ENCODE measurements at regions of chr2 and their contacts with region 1.

Region 1: GRCh38 chr2:109031476-109032228 is 42.6 kb upstream of the EDAR start:
- DNase-seq: peak; percentile 48 to 94 (median 77)
- ATAC-seq: peak; percentile 74
- H3K4me3 ChIP-seq: peak overlapping the region; percentile 49 to 60
- H3K4me3 Mint-ChIP-seq: peak overlapping the region; percentile 76
- H3K27ac ChIP-seq: peak overlapping the region; percentile 76 to 82
- H3K27ac Mint-ChIP-seq: peak overlapping the region; percentile 90
- H3K4me1 ChIP-seq: peaks cover 75% of the 10 kb centered on the region
- H3K4me1 Mint-ChIP-seq: peaks cover 68% of the 10 kb centered on the region
- H3K27me3 ChIP-seq: no peaks in the 10 kb centered on the region
- H3K27me3 Mint-ChIP-seq: no peaks in the 10 kb centered on the region
- CTCF ChIP-seq: no peak

Region 2: GRCh38 chr2:107469437-107469995 is 1562.1 kb before region 1 on chr2:
- CTCF ChIA-PET with region 1: no interaction called
- POLR2A ChIA-PET with region 1: no interaction called
- intact Hi-C with region 1: no loop called
- DNase-seq: no peak
- ATAC-seq: no peak
- H3K4me3 ChIP-seq: no peak overlapping the region
- H3K4me3 Mint-ChIP-seq: no peak overlapping the region
- H3K27ac ChIP-seq: no peak overlapping the region
- H3K27ac Mint-ChIP-seq: no peak overlapping the region
- H3K4me1 ChIP-seq: no peaks in the 10 kb centered on the region
- H3K4me1 Mint-ChIP-seq: no peaks in the 10 kb centered on the region
- H3K27me3 ChIP-seq: no peaks in the 10 kb centered on the region
- H3K27me3 Mint-ChIP-seq: no peaks in the 10 kb centered on the region
- CTCF ChIP-seq: no peak

Region 3: DNA sequence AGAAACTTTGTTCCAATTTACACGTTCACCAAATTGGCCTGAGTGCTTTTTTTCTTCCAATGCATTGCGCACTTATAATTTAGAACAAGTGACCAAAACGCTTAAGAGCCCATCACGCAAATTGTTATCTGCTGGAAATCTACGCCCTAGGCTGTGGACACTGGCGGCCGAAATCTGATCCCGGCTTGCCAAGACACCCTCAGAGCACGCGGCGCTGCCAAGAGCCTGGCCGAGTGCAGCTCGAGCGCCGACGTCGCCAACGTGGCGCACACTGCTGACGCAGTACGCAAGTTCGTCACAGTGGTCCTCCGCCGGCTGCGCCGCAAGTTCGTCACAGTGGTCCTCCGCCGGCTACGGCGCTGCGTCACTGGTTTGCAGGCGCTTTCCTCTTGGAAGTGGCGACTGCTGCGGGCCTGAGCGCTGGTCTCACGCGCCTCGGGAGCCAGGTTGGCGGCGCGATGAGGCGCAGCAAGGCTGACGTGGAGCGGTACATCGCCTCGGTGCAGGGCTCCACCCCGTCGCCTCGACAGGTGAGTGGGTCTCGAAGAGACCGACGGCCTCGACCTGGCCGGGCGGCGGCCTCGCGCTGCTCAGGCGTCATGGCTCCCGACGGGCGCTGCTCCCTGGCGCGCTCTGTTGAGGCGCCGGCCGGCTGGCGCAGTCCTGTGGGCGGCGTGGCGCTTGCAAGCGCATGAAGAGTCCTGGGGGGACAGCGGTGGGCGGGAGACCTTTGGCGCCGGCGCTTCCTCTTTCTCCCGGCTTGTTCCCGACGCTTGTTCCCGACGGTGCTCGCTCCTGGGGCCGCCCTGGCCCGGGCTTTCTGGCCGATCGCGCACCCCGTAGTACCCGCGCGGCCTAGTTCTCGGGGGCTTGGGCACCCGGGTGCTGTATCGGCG is 312.3 kb before region 1 on chr2 and contains the start of gene RANBP2:
- CTCF ChIA-PET with region 1: no interaction called
- POLR2A ChIA-PET with region 1: no interaction called
- intact Hi-C with region 1: loop called in 1 of 2 experiments (anchors 2 kb)
- DNase-seq: peak; percentile 87 to 99 (median 94)
- ATAC-seq: peak; percentile 87
- H3K4me3 ChIP-seq: peak within 1 kb of the TSS; percentile 47 to 57
- H3K4me3 Mint-ChIP-seq: peak within 1 kb of the TSS; percentile 94
- H3K27ac ChIP-seq: peak within 1 kb of the TSS; percentile 91
- H3K27ac Mint-ChIP-seq: peak within 1 kb of the TSS; percentile 99
- H3K4me1 ChIP-seq: peaks cover 16% of the 10 kb centered on the region
- H3K4me1 Mint-ChIP-seq: peaks cover 24% of the 10 kb centered on the region
- H3K27me3 ChIP-seq: no peaks in the 10 kb centered on the region
- H3K27me3 Mint-ChIP-seq: no peaks in the 10 kb centered on the region
- CTCF ChIP-seq: no peak
- total RNA-seq, gene RANBP2: 238 to 240 TPM

Region 4: DNA sequence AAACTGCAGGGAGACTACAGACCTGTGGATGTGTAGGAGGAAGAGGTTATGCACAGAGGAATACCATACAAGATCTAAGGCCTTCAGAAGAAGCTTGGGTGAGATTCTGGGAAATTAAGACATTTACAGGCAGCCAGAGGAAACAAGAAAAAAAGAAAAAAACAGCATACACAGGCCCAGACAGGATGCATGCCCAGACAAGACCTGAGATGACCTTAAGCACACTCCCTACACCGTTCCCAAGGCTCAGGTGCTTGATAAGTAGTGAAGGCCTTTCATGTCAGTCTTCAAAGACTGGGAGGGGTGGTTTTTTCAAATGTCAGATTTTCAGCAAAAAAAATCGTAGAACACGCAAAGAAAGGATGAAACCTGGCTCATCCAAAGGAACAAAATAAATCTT is 162.1 kb before region 1 on chr2:
- CTCF ChIA-PET with region 1: no interaction called
- POLR2A ChIA-PET with region 1: no interaction called
- intact Hi-C with region 1: no loop called
- DNase-seq: no peak
- ATAC-seq: no peak
- H3K4me3 ChIP-seq: no peak overlapping the region
- H3K4me3 Mint-ChIP-seq: no peak overlapping the region
- H3K27ac ChIP-seq: no peak overlapping the region
- H3K27ac Mint-ChIP-seq: no peak overlapping the region
- H3K4me1 ChIP-seq: no peaks in the 10 kb centered on the region
- H3K4me1 Mint-ChIP-seq: no peaks in the 10 kb centered on the region
- H3K27me3 ChIP-seq: no peaks in the 10 kb centered on the region
- H3K27me3 Mint-ChIP-seq: no peaks in the 10 kb centered on the region
- CTCF ChIP-seq: no peak

Region 5: DNA sequence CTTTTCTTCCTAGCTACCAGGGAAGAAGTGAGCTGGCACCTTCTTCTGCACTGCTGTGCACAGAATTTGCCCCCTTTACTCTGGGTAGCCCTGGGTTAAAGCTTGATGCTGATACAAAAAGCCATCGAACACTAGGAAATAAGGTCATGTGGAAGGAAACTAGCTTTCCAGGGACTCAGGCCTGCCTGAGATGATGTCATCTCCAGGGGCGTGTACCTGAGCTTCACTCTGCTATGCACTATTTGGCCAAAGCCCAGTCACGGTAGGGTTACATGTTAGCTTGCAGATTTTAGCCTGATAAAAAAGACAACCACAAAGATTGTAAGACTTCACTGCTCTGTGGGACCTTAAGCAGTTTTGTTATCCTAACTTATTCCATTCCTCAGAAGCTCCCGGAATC is 63.0 kb before region 1 on chr2:
- CTCF ChIA-PET with region 1: no interaction called
- POLR2A ChIA-PET with region 1: interaction called, 14 read pairs
- intact Hi-C with region 1: loop called in 1 of 2 experiments (anchors 1 kb)
- DNase-seq: no peak
- ATAC-seq: no peak
- H3K4me3 ChIP-seq: no peak overlapping the region
- H3K4me3 Mint-ChIP-seq: no peak overlapping the region
- H3K27ac ChIP-seq: no peak overlapping the region
- H3K27ac Mint-ChIP-seq: no peak overlapping the region
- H3K4me1 ChIP-seq: peaks cover 70% of the 10 kb centered on the region
- H3K4me1 Mint-ChIP-seq: peaks cover 88% of the 10 kb centered on the region
- H3K27me3 ChIP-seq: no peaks in the 10 kb centered on the region
- H3K27me3 Mint-ChIP-seq: no peaks in the 10 kb centered on the region
- CTCF ChIP-seq: no peak

Region 6: DNA sequence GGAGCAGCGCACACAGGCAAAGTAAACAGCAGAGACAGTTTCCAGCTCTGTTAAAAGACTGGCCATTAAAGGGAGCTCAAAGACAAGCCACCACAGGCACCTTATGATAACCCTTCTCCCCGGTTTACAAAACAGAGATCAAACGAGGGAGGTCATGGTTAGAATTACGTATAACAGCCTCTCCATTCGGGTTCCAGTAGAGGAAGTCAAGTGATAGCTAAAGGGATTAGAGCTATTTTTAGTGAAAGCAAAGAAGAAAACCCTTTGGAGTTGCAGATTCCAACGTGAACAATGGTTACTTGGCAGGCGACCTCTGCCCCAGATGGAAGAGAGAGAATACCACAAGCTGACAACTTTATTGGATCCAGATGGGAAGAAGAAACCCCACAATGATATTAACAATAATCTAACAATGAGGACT is 11.4 kb before region 1 on chr2:
- CTCF ChIA-PET with region 1: interaction called, 12 read pairs
- POLR2A ChIA-PET with region 1: interaction called, 17 read pairs
- intact Hi-C with region 1: no loop called
- DNase-seq: peak in 2 of 9 experiments; percentile 24 to 48
- ATAC-seq: peak; percentile 92
- H3K4me3 ChIP-seq: no peak overlapping the region
- H3K4me3 Mint-ChIP-seq: peak overlapping the region; percentile 9
- H3K27ac ChIP-seq: no peak overlapping the region
- H3K27ac Mint-ChIP-seq: peak overlapping the region; percentile 23
- H3K4me1 ChIP-seq: peaks cover 16% of the 10 kb centered on the region
- H3K4me1 Mint-ChIP-seq: peaks cover 36% of the 10 kb centered on the region
- H3K27me3 ChIP-seq: no peaks in the 10 kb centered on the region
- H3K27me3 Mint-ChIP-seq: no peaks in the 10 kb centered on the region
- CTCF ChIP-seq: no peak

Region 7: DNA sequence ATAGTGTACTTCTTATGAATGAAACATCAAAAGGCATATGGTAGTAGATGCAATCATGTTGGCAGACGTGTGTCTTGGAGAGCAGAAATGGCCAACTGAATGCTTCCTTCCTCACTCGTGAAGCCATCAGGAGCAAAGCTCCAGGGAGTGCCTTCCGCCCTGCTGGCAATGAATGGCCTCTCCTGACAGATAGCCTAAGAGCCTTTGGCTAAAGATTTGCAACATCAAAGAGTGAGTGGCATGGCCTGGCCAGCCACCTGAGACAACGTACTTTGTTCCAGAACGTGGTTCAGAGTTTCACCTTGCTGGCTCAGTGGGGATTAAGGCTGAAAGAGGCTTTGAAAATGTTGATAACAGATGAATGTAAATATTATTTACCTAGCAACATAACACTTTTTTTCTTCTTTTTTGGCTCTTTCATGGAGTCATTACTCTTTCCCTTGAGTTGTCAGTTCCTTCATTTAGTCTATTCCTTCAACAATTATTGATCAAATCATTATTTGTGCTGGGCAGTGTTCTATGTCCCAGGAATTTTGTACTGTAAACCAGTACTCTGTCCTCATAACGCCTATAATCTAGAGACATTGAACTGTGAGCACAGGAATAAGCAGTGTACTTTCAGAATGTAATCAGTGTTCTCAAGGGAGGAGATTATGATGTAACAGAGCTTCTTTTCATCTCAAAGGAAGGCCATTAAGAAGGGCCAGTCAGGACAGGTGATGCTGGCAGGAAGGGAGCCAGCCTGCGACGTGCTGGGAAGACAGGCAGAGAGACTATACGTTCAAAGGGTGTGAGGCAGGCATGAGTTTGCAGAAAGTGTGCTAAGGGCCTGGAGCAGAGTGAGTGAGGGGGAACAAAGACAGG is 37.9 kb after region 1 on chr2:
- CTCF ChIA-PET with region 1: interaction called, 3 read pairs
- POLR2A ChIA-PET with region 1: interaction called, 7 read pairs
- intact Hi-C with region 1: loop called in 1 of 2 experiments (anchors 5 kb)
- DNase-seq: peak in 1 of 9 experiments; percentile 32
- ATAC-seq: no peak
- H3K4me3 ChIP-seq: no peak overlapping the region
- H3K4me3 Mint-ChIP-seq: no peak overlapping the region
- H3K27ac ChIP-seq: no peak overlapping the region
- H3K27ac Mint-ChIP-seq: no peak overlapping the region
- H3K4me1 ChIP-seq: no peaks in the 10 kb centered on the region
- H3K4me1 Mint-ChIP-seq: peaks cover 2% of the 10 kb centered on the region
- H3K27me3 ChIP-seq: no peaks in the 10 kb centered on the region
- H3K27me3 Mint-ChIP-seq: no peaks in the 10 kb centered on the region
- CTCF ChIP-seq: no peak

Region 8: GRCh38 chr2:109213646-109214417 is 182.2 kb after region 1 on chr2:
- CTCF ChIA-PET with region 1: no interaction called
- POLR2A ChIA-PET with region 1: interaction called, 12 read pairs
- intact Hi-C with region 1: loop called in 1 of 2 experiments (anchors 2 kb)
- DNase-seq: peak; percentile 28 to 86 (median 66)
- ATAC-seq: peak; percentile 79
- H3K4me3 ChIP-seq: no peak overlapping the region
- H3K4me3 Mint-ChIP-seq: peak overlapping the region; percentile 46
- H3K27ac ChIP-seq: no peak overlapping the region
- H3K27ac Mint-ChIP-seq: peak overlapping the region; percentile 69
- H3K4me1 ChIP-seq: peaks cover 59% of the 10 kb centered on the region
- H3K4me1 Mint-ChIP-seq: peaks cover 74% of the 10 kb centered on the region
- H3K27me3 ChIP-seq: peaks cover 18 to 21% of the 10 kb centered on the region in 2 experiments
- H3K27me3 Mint-ChIP-seq: peaks cover 56% of the 10 kb centered on the region
- CTCF ChIP-seq: no peak

Region 9: GRCh38 chr2:109435901-109436598 is 404.4 kb after region 1 on chr2:
- CTCF ChIA-PET with region 1: no interaction called
- POLR2A ChIA-PET with region 1: no interaction called
- intact Hi-C with region 1: no loop called
- DNase-seq: no peak
- ATAC-seq: no peak
- H3K4me3 ChIP-seq: no peak overlapping the region
- H3K4me3 Mint-ChIP-seq: no peak overlapping the region
- H3K27ac ChIP-seq: no peak overlapping the region
- H3K27ac Mint-ChIP-seq: no peak overlapping the region
- H3K4me1 ChIP-seq: no peaks in the 10 kb centered on the region
- H3K4me1 Mint-ChIP-seq: no peaks in the 10 kb centered on the region
- H3K27me3 ChIP-seq: no peaks in the 10 kb centered on the region
- H3K27me3 Mint-ChIP-seq: no peaks in the 10 kb centered on the region
- CTCF ChIP-seq: no peak